ENCODE measurements at regions of chr1 and their contacts with region 1.

Region 1: DNA sequence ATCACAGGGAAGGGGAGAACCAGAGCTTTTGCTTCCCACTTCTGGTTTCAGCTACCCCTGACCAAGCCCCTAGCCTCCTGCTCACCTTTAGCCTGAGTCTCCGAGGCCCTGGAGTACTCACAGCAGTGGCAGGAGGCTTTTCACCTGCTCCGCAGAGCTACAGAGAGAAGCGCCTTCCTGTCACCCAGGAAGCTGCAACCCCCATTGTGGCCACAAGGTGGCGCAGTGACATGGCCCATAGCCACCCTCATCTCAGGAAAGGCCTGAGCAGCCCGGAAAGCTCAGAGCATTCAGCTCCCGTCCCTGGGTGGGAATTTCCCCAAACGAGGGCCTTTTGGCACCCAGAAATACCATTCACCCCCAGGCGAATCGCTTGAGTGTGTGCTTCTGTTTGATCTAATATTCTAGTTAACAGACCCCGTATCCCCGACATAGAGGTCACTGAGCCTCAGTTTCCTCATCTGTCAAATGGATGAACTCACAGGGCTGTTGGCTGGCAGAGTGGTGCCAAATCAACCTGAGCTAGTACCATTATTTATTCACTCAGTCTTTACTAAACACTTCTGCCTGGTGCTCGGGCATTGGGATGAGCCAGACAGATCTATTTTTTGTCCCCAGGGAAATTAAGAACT is 25.3 kb downstream of the A3GALT2 start:
- DNase-seq: peak; percentile 95
- ATAC-seq: peak; percentile 82
- H3K4me3 Mint-ChIP-seq: no peak overlapping the region
- H3K27ac Mint-ChIP-seq: peak overlapping the region; percentile 78
- H3K4me1 Mint-ChIP-seq: peaks cover 12% of the 10 kb centered on the region
- H3K27me3 Mint-ChIP-seq: no peaks in the 10 kb centered on the region
- CTCF ChIP-seq: peak; percentile 99

Region 2: GRCh38 chr1:32828341-32828740 is 467.2 kb before region 1 on chr1:
- CTCF ChIA-PET with region 1: no interaction called
- POLR2A ChIA-PET with region 1: no interaction called
- DNase-seq: no peak
- ATAC-seq: no peak
- H3K4me3 Mint-ChIP-seq: no peak overlapping the region
- H3K27ac Mint-ChIP-seq: no peak overlapping the region
- H3K4me1 Mint-ChIP-seq: no peaks in the 10 kb centered on the region
- H3K27me3 Mint-ChIP-seq: no peaks in the 10 kb centered on the region
- CTCF ChIP-seq: no peak

Region 3: DNA sequence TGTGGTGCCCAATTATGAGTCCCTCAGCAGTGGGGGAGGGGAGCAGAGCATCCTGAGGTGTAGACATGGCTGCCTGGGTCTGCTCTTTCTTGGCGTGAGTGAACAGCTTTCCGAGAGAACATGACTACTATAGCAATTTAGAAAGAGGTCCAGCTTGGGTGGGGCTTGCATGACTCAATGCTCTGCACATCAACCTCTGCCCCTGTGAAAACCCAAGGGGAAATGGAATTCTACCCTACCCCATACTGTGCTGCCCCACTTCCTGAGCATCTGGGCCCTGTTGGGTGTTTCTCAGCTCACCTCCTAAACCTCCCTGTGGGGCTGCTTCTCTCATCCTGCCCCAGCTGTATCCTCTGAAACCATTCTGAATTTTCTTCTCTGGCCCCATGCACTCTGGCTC is 222.9 kb before region 1 on chr1:
- CTCF ChIA-PET with region 1: no interaction called
- POLR2A ChIA-PET with region 1: no interaction called
- DNase-seq: no peak
- ATAC-seq: no peak
- H3K4me3 Mint-ChIP-seq: no peak overlapping the region
- H3K27ac Mint-ChIP-seq: no peak overlapping the region
- H3K4me1 Mint-ChIP-seq: peaks cover 2% of the 10 kb centered on the region
- H3K27me3 Mint-ChIP-seq: peaks cover 22% of the 10 kb centered on the region
- CTCF ChIP-seq: no peak

Region 4: GRCh38 chr1:33137800-33138199 is 157.8 kb before region 1 on chr1:
- CTCF ChIA-PET with region 1: interaction called, 22 read pairs
- POLR2A ChIA-PET with region 1: no interaction called
- DNase-seq: peak; percentile 86
- ATAC-seq: peak; percentile 68
- H3K4me3 Mint-ChIP-seq: no peak overlapping the region
- H3K27ac Mint-ChIP-seq: no peak overlapping the region
- H3K4me1 Mint-ChIP-seq: peaks cover 49% of the 10 kb centered on the region
- H3K27me3 Mint-ChIP-seq: no peaks in the 10 kb centered on the region
- CTCF ChIP-seq: peak; percentile 61

Region 5: GRCh38 chr1:33219881-33220661 is 75.5 kb before region 1 on chr1:
- CTCF ChIA-PET with region 1: interaction called, 11 read pairs
- POLR2A ChIA-PET with region 1: no interaction called
- DNase-seq: no peak
- ATAC-seq: peak; percentile 55
- H3K4me3 Mint-ChIP-seq: no peak overlapping the region
- H3K27ac Mint-ChIP-seq: no peak overlapping the region
- H3K4me1 Mint-ChIP-seq: peaks cover 6% of the 10 kb centered on the region
- H3K27me3 Mint-ChIP-seq: peaks cover 20% of the 10 kb centered on the region
- CTCF ChIP-seq: no peak

Region 6: GRCh38 chr1:33312413-33312749 is 16.8 kb after region 1 on chr1:
- CTCF ChIA-PET with region 1: interaction called, 29 read pairs
- POLR2A ChIA-PET with region 1: no interaction called
- DNase-seq: no peak
- ATAC-seq: no peak
- H3K4me3 Mint-ChIP-seq: no peak overlapping the region
- H3K27ac Mint-ChIP-seq: no peak overlapping the region
- H3K4me1 Mint-ChIP-seq: no peaks in the 10 kb centered on the region
- H3K27me3 Mint-ChIP-seq: peaks cover 48% of the 10 kb centered on the region
- CTCF ChIP-seq: no peak

Region 7: GRCh38 chr1:33334081-33334552 is 38.6 kb after region 1 on chr1:
- CTCF ChIA-PET with region 1: interaction called, 37 read pairs
- POLR2A ChIA-PET with region 1: no interaction called
- DNase-seq: no peak
- ATAC-seq: no peak
- H3K4me3 Mint-ChIP-seq: no peak overlapping the region
- H3K27ac Mint-ChIP-seq: no peak overlapping the region
- H3K4me1 Mint-ChIP-seq: peaks cover 21% of the 10 kb centered on the region
- H3K27me3 Mint-ChIP-seq: peaks cover 24% of the 10 kb centered on the region
- CTCF ChIP-seq: no peak

Region 8: GRCh38 chr1:33367485-33368405 is 72.2 kb after region 1 on chr1:
- CTCF ChIA-PET with region 1: interaction called, 161 read pairs
- POLR2A ChIA-PET with region 1: interaction called, 5 read pairs
- DNase-seq: peak; percentile 93
- ATAC-seq: peak; percentile 71
- H3K4me3 Mint-ChIP-seq: no peak overlapping the region
- H3K27ac Mint-ChIP-seq: no peak overlapping the region
- H3K4me1 Mint-ChIP-seq: peaks cover 35% of the 10 kb centered on the region
- H3K27me3 Mint-ChIP-seq: peaks cover 20% of the 10 kb centered on the region
- CTCF ChIP-seq: peak; percentile 90

Region 9: GRCh38 chr1:33616773-33617172 is 321.2 kb after region 1 on chr1:
- CTCF ChIA-PET with region 1: interaction called, 15 read pairs
- POLR2A ChIA-PET with region 1: no interaction called
- DNase-seq: no peak
- ATAC-seq: no peak
- H3K4me3 Mint-ChIP-seq: no peak overlapping the region
- H3K27ac Mint-ChIP-seq: no peak overlapping the region
- H3K4me1 Mint-ChIP-seq: no peaks in the 10 kb centered on the region
- H3K27me3 Mint-ChIP-seq: peaks cover 5% of the 10 kb centered on the region
- CTCF ChIP-seq: no peak

Region 10: GRCh38 chr1:33641104-33641830 is 345.7 kb after region 1 on chr1:
- CTCF ChIA-PET with region 1: no interaction called
- POLR2A ChIA-PET with region 1: no interaction called
- DNase-seq: peak; percentile 26
- ATAC-seq: peak; percentile 86
- H3K4me3 Mint-ChIP-seq: no peak overlapping the region
- H3K27ac Mint-ChIP-seq: no peak overlapping the region
- H3K4me1 Mint-ChIP-seq: peaks cover 20% of the 10 kb centered on the region
- H3K27me3 Mint-ChIP-seq: no peaks in the 10 kb centered on the region; the same call in 1 of the 2 replicates
- CTCF ChIP-seq: no peak